Activated CD4-positive, alpha-beta T cell treated with anti-CD3 and anti-CD28 coated beads, Interleukin-2, amount 10 ng/mL, durations not matched to agents 24 days and 14 days (primary cell): ENCODE measurements at regions of chr2 and their contacts with region 1.

Region 1: DNA sequence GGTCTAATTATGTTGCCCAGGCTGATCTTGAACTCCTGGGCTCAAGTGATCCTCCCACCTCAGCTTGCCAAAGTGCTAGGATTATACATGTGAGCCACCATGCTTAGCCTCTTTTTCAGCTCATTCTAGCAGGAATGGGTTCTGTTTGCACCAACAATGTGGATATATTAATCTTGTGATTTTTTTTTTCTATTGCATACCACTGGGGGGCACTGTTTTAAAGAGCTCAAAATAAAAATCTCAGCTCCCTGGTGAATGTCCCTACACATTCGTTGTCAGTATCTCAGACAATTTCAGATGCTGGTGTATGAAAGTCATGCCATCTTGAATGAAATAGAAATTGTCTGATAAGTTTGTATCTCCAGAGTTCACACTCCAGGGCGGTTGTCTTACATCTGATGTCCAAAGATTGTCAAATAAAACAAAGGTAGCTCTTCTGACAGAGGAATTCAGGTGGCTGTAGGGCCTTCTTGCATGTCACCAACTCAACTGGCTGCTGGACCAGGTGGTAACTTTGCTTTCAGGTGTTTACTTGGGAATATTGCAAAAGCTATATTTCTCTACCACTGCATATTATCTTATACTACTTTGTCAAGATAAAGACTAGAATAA is 3.1 kb upstream of the MATN3 start:
- DNase-seq: peak; percentile 70
- H3K4me3 Mint-ChIP-seq: no peak overlapping the region
- H3K27ac Mint-ChIP-seq: no peak overlapping the region
- H3K4me1 Mint-ChIP-seq: peaks cover 4% of the 10 kb centered on the region
- H3K27me3 Mint-ChIP-seq: peaks cover 40% of the 10 kb centered on the region

Region 2: DNA sequence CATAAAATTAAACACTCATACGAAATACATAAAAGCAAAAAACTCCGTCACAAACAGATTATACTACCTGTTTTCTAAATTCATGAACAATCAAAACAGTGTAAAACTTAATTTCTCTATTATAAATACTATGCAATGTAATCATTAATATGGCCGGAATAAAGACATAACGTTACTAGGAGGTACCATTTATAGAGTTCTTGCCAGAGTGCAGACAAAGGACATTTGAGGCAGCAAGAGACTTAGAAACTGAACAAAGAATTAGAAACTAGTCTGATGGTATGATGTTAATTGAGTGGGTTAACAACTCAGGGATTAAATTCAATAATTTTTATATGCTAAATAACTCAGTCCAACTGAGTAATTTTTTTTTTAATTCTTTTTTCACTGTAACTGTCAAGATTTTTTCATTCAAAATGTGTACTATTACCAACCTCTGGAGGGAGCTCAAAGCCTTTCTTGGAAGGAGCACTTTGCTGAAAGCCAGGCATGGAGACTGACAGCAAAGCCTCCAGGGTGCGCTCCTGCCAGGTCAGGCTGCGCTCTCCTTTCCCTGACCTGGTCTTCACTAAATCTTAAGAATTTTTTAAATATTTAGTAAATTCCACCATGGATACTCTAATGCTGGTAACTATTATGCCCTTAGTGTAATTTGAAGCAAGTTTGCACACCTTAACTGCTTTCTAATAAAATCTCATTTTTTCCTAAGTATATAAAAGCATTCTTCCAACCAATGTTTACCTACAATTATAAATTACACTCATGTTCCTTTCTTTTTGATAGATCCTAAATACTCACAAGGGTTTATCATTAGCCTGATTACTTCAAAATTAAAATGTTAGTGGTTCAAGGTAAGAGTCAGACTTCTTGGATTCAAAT is 59.8 kb before region 1 on chr2:
- intact Hi-C with region 1: loop called (anchors 5 kb)
- DNase-seq: peak; percentile 84
- H3K4me3 Mint-ChIP-seq: no peak overlapping the region
- H3K27ac Mint-ChIP-seq: no peak overlapping the region
- H3K4me1 Mint-ChIP-seq: no peaks in the 10 kb centered on the region
- H3K27me3 Mint-ChIP-seq: no peaks in the 10 kb centered on the region

Region 3: DNA sequence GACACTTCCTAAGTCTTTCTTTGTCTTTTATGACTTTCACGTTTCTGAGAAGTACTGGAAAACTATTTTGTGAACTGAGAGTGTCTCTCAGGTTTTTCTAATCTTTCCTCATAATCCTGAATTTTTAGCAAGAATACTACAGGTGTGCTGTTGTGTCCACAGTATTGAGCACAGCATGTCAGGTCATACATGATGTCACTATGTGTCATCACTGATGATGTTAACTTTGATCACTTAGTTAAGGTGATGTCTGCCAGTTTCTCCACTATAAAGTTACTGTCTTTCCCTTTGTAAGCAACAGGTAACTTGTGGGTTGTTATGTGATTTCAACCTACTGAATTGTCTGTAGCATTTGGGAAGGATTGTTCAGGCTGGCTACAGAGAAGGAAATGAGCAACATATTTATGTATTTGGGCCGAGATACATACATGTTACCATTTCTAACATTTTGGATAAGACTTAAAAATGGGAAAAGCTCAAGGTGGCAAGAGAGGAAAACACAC is 14.2 kb before region 1 on chr2:
- intact Hi-C with region 1: no loop called
- DNase-seq: no peak
- H3K4me3 Mint-ChIP-seq: no peak overlapping the region
- H3K27ac Mint-ChIP-seq: no peak overlapping the region
- H3K4me1 Mint-ChIP-seq: no peaks in the 10 kb centered on the region
- H3K27me3 Mint-ChIP-seq: peaks cover 20% of the 10 kb centered on the region